GM12878 (cell line): ENCODE measurements at regions of chr19 and their contacts with region 1.

Region 1: DNA sequence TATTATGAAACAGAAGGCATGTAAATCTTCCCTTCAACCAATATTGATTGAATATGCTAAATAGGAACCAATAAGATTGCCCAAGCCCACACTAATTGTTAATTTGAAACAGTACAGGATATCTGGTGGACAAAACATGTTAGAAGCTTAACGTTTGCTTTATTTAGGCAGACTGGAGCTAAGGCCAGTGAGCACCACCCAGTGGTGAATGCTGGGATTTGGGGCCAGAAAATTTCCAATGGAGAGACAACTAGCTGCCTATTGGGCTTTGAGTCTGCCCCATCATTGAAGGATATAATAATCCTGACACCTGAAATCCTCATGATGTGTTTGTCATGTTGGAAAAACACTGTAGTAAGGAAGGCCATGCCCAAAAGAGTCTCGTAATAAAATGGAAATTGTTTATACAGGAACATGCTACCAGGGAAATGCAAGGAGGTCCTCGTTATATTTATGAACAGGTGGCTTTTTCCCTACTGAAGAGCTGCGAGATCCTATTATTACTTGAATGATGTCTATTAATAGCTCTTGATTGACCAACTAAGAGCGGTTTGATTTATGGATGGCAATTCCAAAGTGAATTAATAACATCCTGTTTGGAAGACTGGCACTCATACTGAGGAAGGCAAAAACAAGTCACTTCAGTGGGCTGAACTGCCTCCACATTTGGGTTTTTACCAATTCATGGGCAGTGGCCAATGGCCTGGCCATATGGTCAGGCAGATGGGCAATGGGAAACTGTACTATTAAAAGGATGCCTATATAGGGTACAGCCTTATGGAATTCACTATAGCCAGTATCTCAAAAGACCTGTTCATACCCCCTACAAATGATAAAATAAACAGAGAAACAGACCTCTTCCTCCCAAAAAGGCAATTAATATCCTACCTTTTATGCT is 8.7 kb downstream of the SIGLECL1 start:
- DNase-seq: peak; percentile 12
- ATAC-seq: peak; percentile 75
- H3K4me3 ChIP-seq: no peak overlapping the region
- H3K27ac ChIP-seq: no peak overlapping the region
- H3K4me1 ChIP-seq: no peaks in the 10 kb centered on the region
- H3K27me3 ChIP-seq: no peaks in the 10 kb centered on the region; a peak in 1 of 4 replicates
- CTCF ChIP-seq: peak; percentile 82 to 87 (median 85)
- EP300 ChIP-seq: no peak
- POLR2A ChIP-seq: no peak
- RAD21 ChIP-seq: peak; percentile 87

Region 2: DNA sequence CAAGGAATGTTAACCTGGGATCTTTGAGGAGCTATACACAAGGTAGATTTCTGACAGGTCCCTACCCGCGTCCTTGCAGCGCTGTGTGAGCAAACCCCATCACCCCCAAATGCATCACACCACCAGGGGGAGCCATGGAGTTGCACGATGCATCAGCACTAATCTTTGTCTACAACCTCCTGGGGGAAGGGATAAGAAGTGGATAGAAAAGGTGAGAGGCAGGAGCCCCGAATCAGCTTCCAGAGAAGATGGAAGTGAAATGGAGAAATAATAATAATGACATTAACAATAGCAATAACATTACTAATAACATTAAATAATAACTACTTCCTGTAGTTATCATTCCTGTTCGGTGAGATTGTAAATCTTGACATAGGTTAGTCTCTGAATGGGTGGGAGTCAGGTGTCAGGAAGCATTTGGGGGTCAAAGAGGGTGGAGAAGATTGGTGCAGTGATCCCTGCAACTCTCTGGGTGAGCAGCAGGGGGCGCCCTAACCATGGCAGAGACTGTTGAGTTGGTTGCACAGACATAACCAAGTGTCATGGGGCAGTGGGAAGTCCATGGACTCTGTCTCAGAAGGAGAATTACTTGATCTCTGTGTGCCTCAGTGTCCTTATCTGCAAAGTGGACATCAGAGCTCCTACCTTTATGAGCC is 101.0 kb before region 1 on chr19:
- CTCF ChIA-PET with region 1: interaction called, 121 read pairs
- POLR2A ChIA-PET with region 1: no interaction called
- RAD21 ChIA-PET with region 1: interaction called, 12 read pairs
- SMC1A ChIA-PET with region 1: interaction called, 19 read pairs
- in situ Hi-C with region 1: loop called (anchors 5 kb)
- intact Hi-C with region 1: loop called (anchors 1 kb)
- DNase-seq: no peak
- ATAC-seq: peak; percentile 84
- H3K4me3 ChIP-seq: no peak overlapping the region
- H3K27ac ChIP-seq: no peak overlapping the region
- H3K4me1 ChIP-seq: peaks cover 9% of the 10 kb centered on the region
- H3K27me3 ChIP-seq: peaks cover 2 to 3% of the 10 kb centered on the region in 2 experiments; a peak in 3 of 4 replicates
- CTCF ChIP-seq: peak; percentile 64 to 92 (median 77)
- EP300 ChIP-seq: no peak
- POLR2A ChIP-seq: no peak
- RAD21 ChIP-seq: peak; percentile 74

Region 3: DNA sequence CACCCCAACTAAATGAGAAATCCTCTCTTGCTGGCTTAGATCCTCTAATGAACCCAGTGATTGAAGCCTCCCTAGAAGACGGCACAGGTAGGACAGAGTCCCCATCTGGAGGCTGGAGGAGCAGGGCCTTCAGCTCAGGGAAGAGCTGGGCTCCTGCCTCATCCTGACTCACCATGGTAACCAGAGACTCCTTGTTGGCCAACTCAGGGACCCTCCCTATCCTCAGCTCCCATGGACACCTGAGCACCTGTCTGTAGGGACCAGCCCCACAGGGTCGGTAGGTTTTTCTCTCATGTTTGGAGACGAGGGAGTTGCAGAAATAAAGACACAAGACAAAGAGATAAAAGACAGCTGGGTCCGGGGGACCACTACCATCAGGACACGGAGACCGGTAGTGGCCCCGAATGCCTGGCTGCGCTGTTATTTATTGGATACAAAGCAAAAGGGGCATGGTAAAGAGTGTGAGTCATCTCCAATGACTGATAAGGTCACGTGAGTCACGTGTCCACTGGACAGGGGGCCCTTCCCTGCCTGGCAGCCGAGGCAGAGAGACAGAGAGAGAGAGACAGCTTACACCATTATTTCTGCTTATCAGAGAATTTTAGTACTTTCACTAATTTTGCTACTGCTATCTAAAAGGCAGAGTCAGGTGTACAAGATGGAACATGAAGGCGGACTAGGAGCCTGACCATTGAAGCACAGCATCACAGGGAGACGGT is 90.9 kb before region 1 on chr19:
- CTCF ChIA-PET with region 1: interaction called, 11 read pairs
- POLR2A ChIA-PET with region 1: no interaction called
- RAD21 ChIA-PET with region 1: interaction called, 4 read pairs
- SMC1A ChIA-PET with region 1: interaction called, 3 read pairs
- in situ Hi-C with region 1: no loop called
- intact Hi-C with region 1: no loop called
- DNase-seq: no peak
- ATAC-seq: no peak
- H3K4me3 ChIP-seq: no peak overlapping the region
- H3K27ac ChIP-seq: no peak overlapping the region
- H3K4me1 ChIP-seq: peaks cover 7% of the 10 kb centered on the region
- H3K27me3 ChIP-seq: peaks cover 0 to 2% of the 10 kb centered on the region in 2 experiments; a peak in 1 of 4 replicates
- CTCF ChIP-seq: no peak
- EP300 ChIP-seq: no peak
- POLR2A ChIP-seq: no peak
- RAD21 ChIP-seq: no peak

Region 4: GRCh38 chr19:51272183-51272810 is 12.7 kb after region 1 on chr19:
- CTCF ChIA-PET with region 1: interaction called, 21 read pairs
- POLR2A ChIA-PET with region 1: no interaction called
- RAD21 ChIA-PET with region 1: no interaction called
- SMC1A ChIA-PET with region 1: no interaction called
- in situ Hi-C with region 1: no loop called
- intact Hi-C with region 1: no loop called
- DNase-seq: no peak
- ATAC-seq: 0 out of 3 replicates have a peak, but pooled peaks have one; percentile 33
- H3K4me3 ChIP-seq: no peak overlapping the region
- H3K27ac ChIP-seq: no peak overlapping the region
- H3K4me1 ChIP-seq: no peaks in the 10 kb centered on the region
- H3K27me3 ChIP-seq: no peaks in the 10 kb centered on the region
- CTCF ChIP-seq: no peak
- EP300 ChIP-seq: no peak
- POLR2A ChIP-seq: no peak
- RAD21 ChIP-seq: no peak